ENCODE measurements at regions of chr6 and their contacts with region 1.

Region 1: GRCh38 chr6:152273638-152274037 is 363.5 kb downstream of the SYNE1 start:
- DNase-seq: no peak
- H3K4me3 ChIP-seq: no peak overlapping the region
- H3K27ac ChIP-seq: peak overlapping the region; percentile 69
- H3K4me1 ChIP-seq: peaks cover 45% of the 10 kb centered on the region
- H3K27me3 ChIP-seq: no peaks in the 10 kb centered on the region
- CTCF ChIP-seq: no peak
- POLR2A ChIP-seq: no peak

Region 2: DNA sequence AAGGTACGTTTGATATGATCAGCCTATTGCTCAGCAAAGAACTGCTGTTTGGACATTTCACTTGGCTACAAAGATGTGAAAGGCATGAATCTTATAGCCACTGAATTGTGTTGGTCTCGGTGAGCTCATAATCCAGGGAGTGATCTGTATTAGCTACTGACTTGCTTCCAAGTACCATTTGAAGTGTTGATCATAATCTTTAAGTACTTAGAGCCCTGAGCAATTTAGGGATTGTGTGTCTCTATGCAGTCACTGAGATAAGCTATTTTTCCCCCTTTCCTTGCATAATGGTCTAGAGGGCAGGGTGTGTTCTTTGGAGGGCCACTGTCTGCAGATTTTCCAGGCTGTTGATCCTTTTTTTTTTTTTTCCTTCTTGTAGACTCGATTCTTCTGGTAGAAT is 72.5 kb before region 1 on chr6:
- intact Hi-C with region 1: no loop called
- DNase-seq: no peak
- H3K4me3 ChIP-seq: no peak overlapping the region
- H3K27ac ChIP-seq: no peak overlapping the region
- H3K4me1 ChIP-seq: peaks cover 29% of the 10 kb centered on the region
- H3K27me3 ChIP-seq: no peaks in the 10 kb centered on the region
- CTCF ChIP-seq: no peak
- POLR2A ChIP-seq: no peak

Region 3: DNA sequence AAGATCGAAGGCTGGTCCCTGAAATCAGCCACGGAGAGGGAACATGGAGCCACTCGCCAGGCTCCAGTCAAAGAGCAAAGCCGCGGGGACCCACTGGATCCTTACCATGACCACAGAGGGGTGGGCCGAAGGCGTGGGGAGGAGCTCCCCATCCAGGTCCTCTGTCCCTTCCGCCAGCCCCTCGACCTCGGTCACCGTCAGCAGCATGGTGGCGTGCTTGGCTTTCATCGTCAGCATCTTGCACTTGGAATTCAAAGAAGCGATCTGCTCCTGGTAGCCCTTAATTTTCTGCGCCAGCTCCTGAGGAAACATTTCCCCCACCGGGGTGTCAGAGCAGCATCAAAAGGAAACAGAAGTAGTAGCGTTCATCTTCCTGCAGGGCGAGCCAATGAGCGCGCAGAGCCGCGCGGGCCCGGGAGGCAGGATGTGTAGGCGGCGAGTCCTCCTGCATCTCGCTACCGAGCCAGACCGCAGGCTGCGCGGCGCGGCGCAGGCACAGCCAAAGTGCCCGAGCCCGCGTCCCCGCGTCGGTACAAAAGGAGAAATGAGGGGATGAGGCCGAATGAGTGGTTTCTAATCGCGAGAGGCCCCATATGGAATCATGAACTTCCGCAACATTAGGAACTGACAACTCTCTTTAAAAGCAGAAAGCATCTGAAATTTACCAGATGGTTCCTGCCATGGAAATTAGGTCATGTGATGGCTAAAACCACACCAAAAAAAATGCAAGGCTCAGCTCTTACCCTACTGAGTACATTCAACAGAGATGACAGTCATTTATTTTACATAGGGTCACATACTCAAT is 28.3 kb after region 1 on chr6:
- intact Hi-C with region 1: loop called (anchors 1 kb)
- DNase-seq: peak in 1 of 2 donors; percentile 93
- H3K4me3 ChIP-seq: peak overlapping the region; percentile 44 to 56
- H3K27ac ChIP-seq: peak overlapping the region; percentile 80
- H3K4me1 ChIP-seq: peaks cover 18% of the 10 kb centered on the region
- H3K27me3 ChIP-seq: no peaks in the 10 kb centered on the region
- CTCF ChIP-seq: peak in 1 of 3 experiments; percentile 57
- POLR2A ChIP-seq: peak in 1 of 2 donors; percentile 13

Region 4: DNA sequence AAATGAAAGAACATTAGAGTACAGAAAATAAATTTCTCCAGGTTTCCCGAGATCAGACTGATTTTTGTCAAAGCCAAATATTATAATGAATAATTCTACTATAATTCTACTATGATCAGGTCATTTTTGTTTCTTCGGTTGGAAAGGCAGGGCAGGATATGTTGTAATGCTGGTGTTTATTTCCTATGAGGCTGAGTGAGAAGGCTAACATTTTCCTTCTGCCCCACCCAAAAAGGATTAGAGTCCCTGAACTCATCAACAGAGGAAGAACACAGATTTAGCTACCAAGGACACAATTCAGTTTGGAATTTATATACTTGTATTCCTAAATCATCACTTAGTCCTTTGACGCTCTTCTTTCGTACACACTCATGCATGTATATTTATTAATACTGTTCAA is 44.6 kb after region 1 on chr6:
- intact Hi-C with region 1: no loop called
- DNase-seq: no peak
- H3K4me3 ChIP-seq: no peak overlapping the region
- H3K27ac ChIP-seq: no peak overlapping the region
- H3K4me1 ChIP-seq: no peaks in the 10 kb centered on the region
- H3K27me3 ChIP-seq: no peaks in the 10 kb centered on the region
- CTCF ChIP-seq: no peak
- POLR2A ChIP-seq: no peak